A673 (cell line): ENCODE measurements at regions of chr2 and their contacts with region 1.

Region 1: DNA sequence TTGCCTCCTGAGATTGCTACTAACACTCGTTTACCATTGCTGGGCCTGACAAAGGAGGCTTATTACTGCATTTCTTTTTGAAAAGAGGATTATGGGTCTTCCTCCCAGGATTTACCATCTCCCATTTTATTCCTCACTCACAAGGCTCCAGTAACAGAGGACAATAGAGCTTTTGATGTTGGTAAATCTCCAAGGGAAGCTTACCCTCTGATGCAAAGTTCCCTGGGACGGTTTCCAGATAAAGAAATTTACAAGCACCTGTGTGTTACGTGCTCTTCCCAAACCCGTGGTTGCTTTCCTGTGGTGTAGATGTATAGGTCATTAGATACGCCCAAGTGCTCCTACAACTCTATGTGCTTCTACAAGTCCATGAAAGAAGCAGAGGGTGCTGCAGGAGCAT is 17.1 kb downstream of the VSNL1 start:
- DNase-seq: no peak
- H3K4me3 ChIP-seq: no peak overlapping the region
- H3K27ac ChIP-seq: no peak overlapping the region
- H3K4me1 ChIP-seq: no peaks in the 10 kb centered on the region
- H3K27me3 ChIP-seq: no peaks in the 10 kb centered on the region
- CTCF ChIP-seq: no peak

Region 2: GRCh38 chr2:18045230-18045629 is 487.6 kb after region 1 on chr2:
- CTCF ChIA-PET with region 1: no interaction called
- POLR2A ChIA-PET with region 1: interaction called, 12 read pairs
- intact Hi-C with region 1: no loop called
- DNase-seq: no peak
- H3K4me3 ChIP-seq: no peak overlapping the region
- H3K27ac ChIP-seq: no peak overlapping the region
- H3K4me1 ChIP-seq: peaks cover 11% of the 10 kb centered on the region
- H3K27me3 ChIP-seq: no peaks in the 10 kb centered on the region
- CTCF ChIP-seq: no peak